ENCODE measurements at regions of chr5 and their contacts with region 1.

Region 1: GRCh38 chr5:60522292-60522905 is 177.6 kb downstream of the DEPDC1B start:
- DNase-seq: peak; percentile 28
- H3K4me3 ChIP-seq: peak overlapping the region; percentile 63
- H3K27ac ChIP-seq: peak overlapping the region; percentile 49
- H3K4me1 ChIP-seq: peaks cover 33% of the 10 kb centered on the region
- CTCF ChIP-seq: no peak

Region 2: GRCh38 chr5:60161340-60161934 is 361.0 kb before region 1 on chr5:
- CTCF ChIA-PET with region 1: no interaction called
- POLR2A ChIA-PET with region 1: no interaction called
- intact Hi-C with region 1: no loop called
- DNase-seq: peak; percentile 16
- H3K4me3 ChIP-seq: no peak overlapping the region
- H3K27ac ChIP-seq: no peak overlapping the region
- H3K4me1 ChIP-seq: no peaks in the 10 kb centered on the region
- CTCF ChIP-seq: peak; percentile 79

Region 3: DNA sequence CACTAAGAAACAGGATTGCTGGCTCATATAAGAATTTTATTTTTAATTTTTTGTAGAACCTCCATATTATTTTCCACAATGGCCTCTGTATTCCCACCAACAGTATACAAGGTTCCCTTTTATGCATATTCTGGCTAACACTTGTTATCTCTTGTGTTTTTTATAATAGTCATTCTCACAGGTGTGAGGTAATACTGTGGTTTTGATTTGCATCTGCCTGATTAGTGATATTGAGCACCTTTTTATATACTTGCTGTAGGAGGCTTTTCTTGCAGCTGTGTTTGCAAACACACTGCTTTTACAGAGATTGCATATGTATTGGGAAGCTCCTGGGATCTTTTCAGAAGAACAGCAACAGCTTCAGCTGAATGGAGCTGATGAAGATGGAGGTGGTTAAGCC is 12.8 kb after region 1 on chr5:
- CTCF ChIA-PET with region 1: no interaction called
- POLR2A ChIA-PET with region 1: interaction called, 12 read pairs
- intact Hi-C with region 1: no loop called
- DNase-seq: no peak
- H3K4me3 ChIP-seq: no peak overlapping the region
- H3K27ac ChIP-seq: no peak overlapping the region
- H3K4me1 ChIP-seq: peaks cover 30% of the 10 kb centered on the region
- CTCF ChIP-seq: no peak

Region 4: GRCh38 chr5:60597572-60598320 is 75.3 kb after region 1 on chr5:
- CTCF ChIA-PET with region 1: no interaction called
- POLR2A ChIA-PET with region 1: interaction called, 4 read pairs
- intact Hi-C with region 1: loop called (anchors 5 kb)
- DNase-seq: peak; percentile 74
- H3K4me3 ChIP-seq: peak overlapping the region; percentile 0
- H3K27ac ChIP-seq: peak overlapping the region; percentile 62
- H3K4me1 ChIP-seq: peaks cover 26% of the 10 kb centered on the region
- CTCF ChIP-seq: no peak